GM12878 (cell line): ENCODE measurements at regions of chr1 and their contacts with region 1.

Region 1: DNA sequence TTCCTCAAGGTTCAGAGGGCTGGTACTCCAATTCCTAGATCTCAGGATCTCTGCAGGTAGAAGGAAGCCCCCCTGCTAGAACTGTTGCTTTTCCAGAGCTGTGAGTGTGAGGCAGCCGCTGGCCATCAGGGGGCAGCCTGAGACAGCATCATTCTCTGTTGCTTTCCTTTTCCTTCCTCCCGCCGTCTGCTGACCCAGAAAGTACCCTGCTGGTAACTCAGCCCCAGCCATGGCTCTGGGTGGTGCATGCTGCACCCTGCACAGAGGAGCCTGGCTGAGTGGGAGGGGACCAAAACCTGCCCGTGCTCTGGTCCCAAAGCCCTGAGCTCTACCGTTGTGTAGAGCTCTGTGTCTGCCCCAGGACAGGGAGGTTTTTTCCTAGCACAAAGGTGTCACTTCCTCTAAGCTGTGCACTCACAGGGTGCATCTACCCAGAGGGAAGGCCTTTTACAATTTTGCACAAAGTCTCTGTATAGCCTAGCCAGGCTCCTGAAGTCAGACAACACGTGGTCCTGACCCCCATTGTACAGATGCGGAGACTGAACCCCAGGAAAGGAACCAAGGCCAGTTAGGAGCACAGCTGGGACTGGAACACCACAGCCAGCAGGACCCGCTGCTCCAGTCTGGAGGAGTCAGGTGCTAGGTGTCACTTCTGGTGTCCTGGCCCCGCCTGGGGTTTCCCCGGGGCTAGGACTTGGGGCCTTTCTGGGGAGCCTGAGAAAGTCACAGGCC is 5.6 kb upstream of the FAM131C start:
- DNase-seq: peak; percentile 49
- ATAC-seq: peak; percentile 88
- H3K4me3 ChIP-seq: peak overlapping the region; percentile 38; the same call in 1 of the 2 replicates
- H3K27ac ChIP-seq: peak overlapping the region; percentile 0; the same call in 1 of the 2 replicates
- H3K4me1 ChIP-seq: peaks cover 8% of the 10 kb centered on the region
- H3K27me3 ChIP-seq: no peaks in the 10 kb centered on the region
- CTCF ChIP-seq: peak; percentile 92 to 95 (median 93)
- EP300 ChIP-seq: no peak
- POLR2A ChIP-seq: no peak
- RAD21 ChIP-seq: peak; percentile 88

Region 2: DNA sequence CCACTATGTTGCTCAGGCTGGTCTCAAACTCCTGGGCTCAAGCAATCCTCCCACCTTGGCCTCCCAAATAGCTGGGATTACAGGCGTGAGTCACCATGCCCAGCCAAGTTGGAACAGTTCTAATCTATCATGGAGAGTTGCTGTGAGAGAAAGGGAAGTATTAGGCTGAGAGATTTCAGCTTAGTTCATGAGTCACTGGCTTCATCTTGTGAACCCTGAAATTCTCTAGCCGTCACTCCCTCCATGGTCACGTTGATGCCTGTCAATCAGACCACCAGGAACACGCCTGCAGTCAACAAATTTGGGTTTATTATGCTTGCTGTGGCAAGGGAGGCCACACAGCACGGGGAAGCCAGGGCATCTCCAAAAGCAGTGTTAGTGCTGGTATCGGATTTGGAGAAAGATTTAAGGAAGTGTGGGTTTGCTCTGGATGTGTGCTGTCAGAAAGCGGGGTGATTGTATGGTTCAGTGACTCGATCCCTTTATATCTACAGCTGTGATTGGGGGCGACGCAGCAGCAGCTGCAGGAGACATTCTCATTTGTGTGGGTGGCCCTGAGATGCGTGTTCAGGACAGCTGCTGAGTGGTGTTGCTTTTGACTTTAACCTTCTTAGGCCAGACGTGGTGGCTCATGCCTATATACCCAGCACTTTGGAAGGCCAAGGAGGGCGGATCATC is 290.3 kb before region 1 on chr1:
- CTCF ChIA-PET with region 1: interaction called, 14 read pairs
- POLR2A ChIA-PET with region 1: no interaction called
- RAD21 ChIA-PET with region 1: no interaction called
- SMC1A ChIA-PET with region 1: no interaction called
- in situ Hi-C with region 1: no loop called
- intact Hi-C with region 1: no loop called
- DNase-seq: no peak
- ATAC-seq: peak; percentile 34; the same call in 2 of the 3 replicates
- H3K4me3 ChIP-seq: no peak overlapping the region
- H3K27ac ChIP-seq: no peak overlapping the region
- H3K4me1 ChIP-seq: peaks cover 5% of the 10 kb centered on the region
- H3K27me3 ChIP-seq: no peaks in the 10 kb centered on the region; a peak in 1 of 4 replicates
- CTCF ChIP-seq: no peak
- EP300 ChIP-seq: no peak
- POLR2A ChIP-seq: no peak
- RAD21 ChIP-seq: no peak

Region 3: DNA sequence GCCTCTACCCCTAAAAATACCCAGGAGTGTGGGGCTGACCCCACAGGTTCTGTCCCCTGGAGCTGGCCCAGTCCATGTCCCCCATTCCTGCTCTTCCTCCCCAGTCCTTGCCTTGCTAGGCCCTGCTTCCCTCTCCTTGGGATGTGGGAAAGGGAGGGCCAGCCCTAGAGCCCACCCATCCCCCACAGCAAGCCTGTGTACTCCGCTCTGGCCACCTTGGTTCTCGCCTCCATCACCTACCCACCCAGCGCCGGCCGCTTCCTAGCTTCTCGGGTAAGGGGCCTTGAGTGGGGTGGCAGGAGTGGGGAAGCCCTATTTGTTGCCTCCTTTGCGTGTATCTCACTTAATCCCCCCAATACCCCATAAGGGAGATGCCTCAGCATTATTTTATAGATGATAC is 28.8 kb before region 1 on chr1:
- CTCF ChIA-PET with region 1: no interaction called
- POLR2A ChIA-PET with region 1: no interaction called
- RAD21 ChIA-PET with region 1: no interaction called
- SMC1A ChIA-PET with region 1: no interaction called
- in situ Hi-C with region 1: no loop called
- intact Hi-C with region 1: no loop called
- DNase-seq: no peak
- ATAC-seq: no peak
- H3K4me3 ChIP-seq: no peak overlapping the region
- H3K27ac ChIP-seq: no peak overlapping the region
- H3K4me1 ChIP-seq: no peaks in the 10 kb centered on the region
- H3K27me3 ChIP-seq: no peaks in the 10 kb centered on the region; a peak in 3 of 4 replicates
- CTCF ChIP-seq: no peak
- EP300 ChIP-seq: no peak
- POLR2A ChIP-seq: no peak
- RAD21 ChIP-seq: no peak

Region 4: DNA sequence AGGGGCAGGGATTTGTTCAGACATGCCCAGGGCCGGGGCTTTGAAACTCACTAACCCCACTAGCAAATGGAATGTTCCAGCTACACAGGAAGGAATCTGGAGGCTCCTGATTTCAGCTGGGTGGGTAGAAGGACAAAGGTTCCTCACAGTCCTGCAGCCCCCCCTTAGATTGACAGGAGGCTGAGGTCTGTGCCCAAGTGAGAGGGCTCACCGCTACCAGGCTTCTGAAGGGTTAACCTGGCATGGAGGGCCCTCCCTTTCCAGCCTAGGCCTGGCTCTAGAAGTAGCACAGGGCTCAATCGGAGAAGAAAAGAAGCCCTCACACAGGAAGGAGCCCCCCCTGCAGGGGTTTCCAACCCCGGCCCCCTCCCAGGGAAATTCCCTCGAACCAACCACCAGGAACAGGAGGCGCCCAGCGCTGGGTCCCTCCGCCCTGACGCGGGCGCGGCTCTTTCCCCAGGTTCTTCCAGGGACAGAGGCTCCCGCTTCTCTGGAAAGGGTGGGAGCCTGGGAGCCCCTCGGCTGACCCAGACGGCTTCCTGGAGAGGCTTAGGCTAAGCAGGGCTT is 73.5 kb after region 1 on chr1:
- CTCF ChIA-PET with region 1: interaction called, 13 read pairs
- POLR2A ChIA-PET with region 1: no interaction called
- RAD21 ChIA-PET with region 1: interaction called, 3 read pairs
- SMC1A ChIA-PET with region 1: interaction called, 3 read pairs
- in situ Hi-C with region 1: no loop called
- intact Hi-C with region 1: no loop called
- DNase-seq: no peak
- ATAC-seq: no peak
- H3K4me3 ChIP-seq: no peak overlapping the region
- H3K27ac ChIP-seq: no peak overlapping the region
- H3K4me1 ChIP-seq: peaks cover 8% of the 10 kb centered on the region
- H3K27me3 ChIP-seq: peaks cover 3 to 6% of the 10 kb centered on the region in 2 experiments; a peak in 3 of 4 replicates
- CTCF ChIP-seq: no peak
- EP300 ChIP-seq: no peak
- POLR2A ChIP-seq: no peak
- RAD21 ChIP-seq: no peak

Region 5: GRCh38 chr1:16187748-16188401 is 108.8 kb after region 1 on chr1:
- CTCF ChIA-PET with region 1: interaction called, 375 read pairs
- POLR2A ChIA-PET with region 1: interaction called, 4 read pairs
- RAD21 ChIA-PET with region 1: interaction called, 223 read pairs
- SMC1A ChIA-PET with region 1: interaction called, 63 read pairs
- in situ Hi-C with region 1: loop called (anchors 5 kb)
- intact Hi-C with region 1: loop called (anchors 1 kb)
- DNase-seq: no peak
- ATAC-seq: peak; percentile 93
- H3K4me3 ChIP-seq: no peak overlapping the region
- H3K27ac ChIP-seq: no peak overlapping the region
- H3K4me1 ChIP-seq: no peaks in the 10 kb centered on the region
- H3K27me3 ChIP-seq: no peaks in the 10 kb centered on the region
- CTCF ChIP-seq: peak; percentile 91 to 96 (median 94)
- EP300 ChIP-seq: no peak
- POLR2A ChIP-seq: no peak
- RAD21 ChIP-seq: peak; percentile 98

Region 6: GRCh38 chr1:16243936-16244649 is 165.0 kb after region 1 on chr1:
- CTCF ChIA-PET with region 1: interaction called, 40 read pairs
- POLR2A ChIA-PET with region 1: no interaction called
- RAD21 ChIA-PET with region 1: interaction called, 18 read pairs
- SMC1A ChIA-PET with region 1: interaction called, 16 read pairs
- in situ Hi-C with region 1: loop called (anchors 5 kb)
- intact Hi-C with region 1: loop called (anchors 1 kb)
- DNase-seq: peak; percentile 21
- ATAC-seq: peak; percentile 88
- H3K4me3 ChIP-seq: no peak overlapping the region
- H3K27ac ChIP-seq: no peak overlapping the region
- H3K4me1 ChIP-seq: peaks cover 11% of the 10 kb centered on the region
- H3K27me3 ChIP-seq: no peaks in the 10 kb centered on the region
- CTCF ChIP-seq: peak; percentile 91 to 94 (median 91)
- EP300 ChIP-seq: no peak
- POLR2A ChIP-seq: no peak; the same call in 1 of the 2 replicates
- RAD21 ChIP-seq: peak; percentile 93

Region 7: GRCh38 chr1:16459352-16459925 is 380.3 kb after region 1 on chr1:
- CTCF ChIA-PET with region 1: no interaction called
- POLR2A ChIA-PET with region 1: no interaction called
- RAD21 ChIA-PET with region 1: no interaction called
- SMC1A ChIA-PET with region 1: no interaction called
- in situ Hi-C with region 1: no loop called
- intact Hi-C with region 1: no loop called
- DNase-seq: no peak
- ATAC-seq: no peak
- H3K4me3 ChIP-seq: no peak overlapping the region
- H3K27ac ChIP-seq: no peak overlapping the region
- H3K4me1 ChIP-seq: no peaks in the 10 kb centered on the region
- H3K27me3 ChIP-seq: no peaks in the 10 kb centered on the region
- CTCF ChIP-seq: no peak
- EP300 ChIP-seq: no peak
- POLR2A ChIP-seq: peak; percentile 35; the same call in 1 of the 2 replicates
- RAD21 ChIP-seq: no peak